ENCODE measurements at regions of chr22 and their contacts with region 1.

Region 1: DNA sequence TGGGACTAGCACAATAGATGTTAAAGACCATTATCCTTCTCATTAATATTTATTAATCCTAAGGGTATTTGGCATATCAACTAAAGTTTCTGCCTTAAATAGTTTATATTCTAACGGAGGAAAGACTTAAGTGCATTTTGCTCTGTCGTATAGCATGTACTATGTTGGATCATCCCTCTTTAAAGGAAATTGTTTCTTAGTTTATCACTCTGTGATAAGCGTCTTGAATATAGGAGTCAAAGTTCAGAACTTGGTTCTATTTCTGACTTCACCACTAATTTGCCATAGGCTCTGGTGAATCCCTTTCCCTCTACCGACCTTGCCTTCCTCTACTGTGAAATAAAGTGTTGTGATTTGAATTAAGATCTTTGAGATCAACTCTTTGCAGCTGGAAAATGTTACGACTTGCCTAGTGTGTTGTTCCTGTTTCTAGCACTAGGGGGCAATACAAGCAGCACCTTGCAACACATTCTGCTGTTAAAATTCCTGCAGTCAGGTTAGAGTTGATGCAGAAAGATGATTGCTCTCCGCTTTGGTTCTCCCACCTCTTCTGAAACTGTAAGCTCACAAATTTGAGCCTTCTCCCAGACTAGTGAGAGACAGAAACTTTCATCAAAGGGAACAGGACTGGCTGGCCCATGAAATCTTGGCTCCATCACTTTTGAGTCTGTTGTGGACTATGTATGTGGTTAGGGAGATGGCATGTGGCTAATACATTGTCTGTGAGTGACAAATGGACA is 27.8 kb upstream of the ZNRF3 start:
- DNase-seq: peak; percentile 61
- H3K4me3 ChIP-seq: no peak overlapping the region
- H3K27ac ChIP-seq: no peak overlapping the region
- H3K4me1 ChIP-seq: no peaks in the 10 kb centered on the region
- H3K27me3 ChIP-seq: no peaks in the 10 kb centered on the region

Region 2: DNA sequence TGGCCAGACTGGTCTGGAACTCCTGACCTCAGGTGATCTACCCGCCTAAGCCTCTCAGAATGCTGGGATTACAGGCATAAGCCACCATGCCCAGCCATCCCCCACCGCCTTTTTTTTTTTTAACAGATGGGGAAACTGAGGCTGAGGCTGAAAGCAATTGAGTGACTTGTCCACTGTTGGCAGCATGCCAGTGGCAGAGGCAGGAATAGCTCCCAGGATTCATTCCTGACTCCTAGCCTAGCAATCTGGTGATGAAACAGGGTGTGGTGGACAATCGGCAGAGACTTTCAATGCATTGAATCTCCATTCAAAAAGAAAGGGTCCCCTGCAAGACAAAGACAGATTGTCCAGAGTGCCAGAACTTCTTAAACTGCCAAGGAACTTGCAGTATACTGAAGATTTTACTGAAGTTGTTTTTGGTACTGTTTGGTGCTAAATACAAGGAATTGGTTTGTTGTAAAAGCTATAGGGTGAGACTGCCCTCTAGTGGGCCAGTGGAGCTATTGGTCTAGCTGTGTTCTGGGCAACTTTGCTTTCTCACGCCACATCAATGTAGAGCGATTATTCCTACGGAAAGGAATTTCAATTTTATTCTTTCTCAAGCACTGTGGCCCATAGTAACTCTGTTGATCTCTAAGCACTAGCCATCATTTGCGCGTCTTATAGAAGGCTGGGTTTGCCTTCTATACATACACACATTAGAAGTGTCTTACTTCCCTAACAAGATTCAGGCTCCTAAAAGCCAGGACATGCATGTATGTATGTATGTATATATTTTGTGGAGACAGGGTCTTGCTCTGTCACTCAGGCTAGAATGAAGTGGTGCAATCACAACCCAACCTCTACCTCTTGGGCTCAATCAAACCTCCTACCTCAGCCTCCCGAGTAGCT is 185.1 kb after region 1 on chr22:
- in situ Hi-C with region 1: loop called (anchors 5 kb)
- DNase-seq: peak; percentile 92
- H3K4me3 ChIP-seq: peak overlapping the region; percentile 35; the same call in 1 of the 2 replicates
- H3K27ac ChIP-seq: peak overlapping the region; percentile 78
- H3K4me1 ChIP-seq: peaks cover 40% of the 10 kb centered on the region
- H3K27me3 ChIP-seq: no peaks in the 10 kb centered on the region

Region 3: DNA sequence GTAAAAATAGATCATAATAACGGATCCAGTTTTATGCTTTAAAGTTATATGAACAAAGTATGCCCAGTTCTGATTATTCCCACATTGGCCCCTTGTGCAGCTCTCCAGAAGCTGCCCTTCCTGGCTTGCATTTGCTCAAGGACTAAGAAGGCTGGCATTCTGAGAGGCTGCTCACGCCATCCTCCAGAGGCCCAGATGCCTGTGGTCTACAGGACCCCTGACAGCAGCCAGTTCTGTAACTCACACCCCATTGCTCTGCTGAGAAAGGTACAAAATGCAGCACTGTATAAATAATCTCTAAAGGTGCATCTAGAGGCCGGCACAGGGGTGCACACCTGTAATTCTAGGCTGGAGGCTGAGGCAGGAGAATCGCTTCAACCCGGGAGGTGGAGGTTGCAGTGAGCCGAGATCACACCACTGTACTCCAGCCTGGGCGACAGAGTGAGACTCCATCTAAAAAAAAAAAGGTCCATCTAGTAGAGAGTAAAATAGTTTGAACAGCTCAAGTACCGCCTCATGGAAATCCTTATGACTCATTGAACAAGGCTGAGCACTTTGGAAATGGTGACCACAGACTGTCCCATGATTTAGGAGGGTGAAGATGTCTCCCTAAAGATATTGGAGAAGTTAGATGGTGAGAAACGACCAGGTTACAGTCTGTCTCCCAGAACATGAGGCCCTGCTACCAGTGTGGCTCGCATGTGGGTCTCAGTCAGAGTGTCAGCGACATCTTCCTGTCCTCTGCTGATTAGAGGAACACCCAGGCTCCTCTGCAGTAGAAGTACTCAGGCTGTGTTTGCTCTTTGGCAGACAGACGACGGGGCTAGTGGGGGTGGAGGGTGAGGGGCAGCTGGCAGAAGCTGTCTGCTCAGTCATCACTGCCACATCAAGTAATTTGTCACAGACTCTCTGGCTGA is 273.6 kb after region 1 on chr22:
- in situ Hi-C with region 1: loop called (anchors 25 kb)
- DNase-seq: peak; percentile 84
- H3K4me3 ChIP-seq: no peak overlapping the region
- H3K27ac ChIP-seq: peak overlapping the region; percentile 67
- H3K4me1 ChIP-seq: peaks cover 17% of the 10 kb centered on the region
- H3K27me3 ChIP-seq: no peaks in the 10 kb centered on the region

Region 4: DNA sequence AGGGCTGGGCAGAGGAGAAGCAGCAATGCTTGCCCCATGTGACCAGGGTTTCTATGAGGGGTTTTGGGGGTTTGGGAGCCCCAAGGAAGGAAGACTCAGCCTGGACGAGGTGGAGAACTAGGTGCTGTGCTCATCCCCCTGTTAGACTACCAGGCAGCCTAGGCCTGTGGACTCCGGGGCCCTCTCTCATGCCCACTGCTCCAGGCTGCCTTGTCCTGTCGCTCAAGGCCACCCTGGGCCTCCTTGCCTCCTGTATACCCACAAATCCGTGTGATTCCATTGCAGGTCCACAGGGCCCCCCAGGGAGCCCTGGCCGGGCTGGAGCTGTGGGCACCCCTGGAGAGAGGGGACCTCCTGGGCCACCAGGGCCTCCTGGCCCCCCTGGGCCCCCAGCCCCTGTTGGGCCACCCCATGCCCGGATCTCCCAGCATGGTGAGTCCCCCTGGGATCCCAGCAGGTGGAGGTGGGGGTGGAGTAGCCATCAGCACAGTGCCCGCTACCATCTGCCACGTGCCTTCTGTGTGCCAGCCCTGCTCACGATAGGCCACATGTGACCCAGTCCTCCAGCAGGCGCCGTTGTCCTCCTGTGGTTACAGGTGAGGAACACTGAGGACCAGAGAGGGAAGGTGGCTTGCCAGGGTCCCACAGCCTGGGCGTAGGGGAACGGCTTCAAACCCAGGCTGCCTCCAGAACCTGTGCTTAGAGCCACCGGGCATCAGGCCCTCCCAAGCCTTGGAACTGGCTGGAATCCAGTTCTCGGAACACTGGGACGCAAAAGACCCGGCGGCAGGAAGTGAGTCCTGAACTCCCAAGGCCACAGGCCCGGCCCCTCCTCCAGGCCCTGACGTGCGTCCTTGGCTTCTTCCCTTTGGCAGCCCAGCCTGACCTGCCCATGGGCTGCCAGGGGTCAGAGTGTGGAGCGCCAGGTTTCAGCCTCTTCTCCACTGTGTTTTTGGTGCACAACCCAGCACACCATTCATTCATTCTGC is 376.7 kb after region 1 on chr22:
- in situ Hi-C with region 1: loop called (anchors 10 kb)
- DNase-seq: no peak
- H3K4me3 ChIP-seq: no peak overlapping the region
- H3K27ac ChIP-seq: no peak overlapping the region
- H3K4me1 ChIP-seq: no peaks in the 10 kb centered on the region
- H3K27me3 ChIP-seq: peaks cover 6% of the 10 kb centered on the region; the same call in 1 of the 2 replicates